Cardiac septum (tissue), 1 donor: ENCODE measurements at regions of chr1 and their contacts with region 1.

Region 1: DNA sequence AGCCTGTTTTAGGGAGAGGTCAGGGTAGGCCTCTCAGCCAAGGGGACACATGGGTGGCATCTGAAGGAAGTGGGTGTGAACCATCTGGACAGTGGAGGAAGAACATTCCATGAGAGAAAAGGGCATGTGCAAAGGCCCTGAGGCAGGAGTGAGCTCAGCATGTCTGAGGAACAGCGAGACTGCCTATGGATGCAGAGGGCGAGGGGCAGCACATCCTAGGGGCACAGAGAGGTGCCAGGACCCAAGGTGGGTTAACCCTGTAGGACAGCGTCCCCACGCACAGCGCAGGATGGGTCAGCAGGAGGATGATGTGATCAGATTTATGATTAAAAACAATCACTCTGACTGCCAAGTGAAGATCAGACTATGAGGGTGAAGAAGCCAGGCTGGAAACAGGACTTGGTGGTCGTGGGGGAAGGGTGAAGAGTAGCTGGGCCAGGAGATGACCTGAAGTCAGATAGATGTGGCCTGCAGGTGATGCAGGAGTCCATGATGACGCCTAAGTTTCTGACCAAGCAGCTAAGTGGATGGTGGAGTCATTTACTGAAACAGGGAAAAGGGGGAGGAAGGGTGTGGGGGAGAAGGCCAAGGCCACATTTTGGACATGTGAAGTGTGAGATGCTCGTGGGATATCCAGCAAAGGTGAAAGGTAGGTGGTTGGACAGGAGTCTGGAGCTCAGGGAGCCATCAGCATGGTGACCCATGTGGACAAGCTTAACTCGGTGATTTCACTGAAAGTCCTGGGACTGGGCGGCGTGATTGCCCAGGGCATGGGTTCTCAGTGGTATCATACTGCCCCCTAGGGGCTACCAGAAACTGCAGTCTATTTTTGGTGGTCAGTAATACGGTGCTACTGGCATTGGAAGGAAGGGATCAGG is 37.8 kb downstream of the PABPC4 start:
- DNase-seq: no peak

Region 2: GRCh38 chr1:39098546-39099250 is 440.1 kb before region 1 on chr1:
- intact Hi-C with region 1: loop called (anchors 2 kb)
- DNase-seq: no peak

Region 3: GRCh38 chr1:39575191-39576015 is 36.6 kb after region 1 on chr1:
- intact Hi-C with region 1: loop called (anchors 2 kb)
- DNase-seq: peak; percentile 85

Region 4: DNA sequence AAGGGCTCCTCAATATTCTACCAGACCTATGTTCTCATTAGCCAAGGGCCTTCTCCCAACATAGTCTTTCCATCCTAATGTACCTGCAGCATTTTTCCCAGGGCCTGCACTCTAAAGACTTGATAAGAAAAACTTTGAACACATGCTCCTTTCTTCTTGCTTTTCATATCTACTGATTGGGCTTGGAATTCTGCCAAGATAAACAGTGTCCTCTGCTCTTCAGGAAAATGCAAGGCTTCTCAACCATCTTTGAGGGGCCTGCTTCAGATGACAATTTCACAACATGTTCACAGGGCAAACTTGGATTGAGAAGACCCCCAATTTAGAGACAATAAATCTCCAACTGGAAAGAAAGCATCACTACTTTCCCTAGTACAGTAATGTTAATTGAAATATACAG is 584.0 kb after region 1 on chr1:
- intact Hi-C with region 1: no loop called
- DNase-seq: no peak